ENCODE measurements at regions of chr5 and their contacts with region 1.

Region 1: DNA sequence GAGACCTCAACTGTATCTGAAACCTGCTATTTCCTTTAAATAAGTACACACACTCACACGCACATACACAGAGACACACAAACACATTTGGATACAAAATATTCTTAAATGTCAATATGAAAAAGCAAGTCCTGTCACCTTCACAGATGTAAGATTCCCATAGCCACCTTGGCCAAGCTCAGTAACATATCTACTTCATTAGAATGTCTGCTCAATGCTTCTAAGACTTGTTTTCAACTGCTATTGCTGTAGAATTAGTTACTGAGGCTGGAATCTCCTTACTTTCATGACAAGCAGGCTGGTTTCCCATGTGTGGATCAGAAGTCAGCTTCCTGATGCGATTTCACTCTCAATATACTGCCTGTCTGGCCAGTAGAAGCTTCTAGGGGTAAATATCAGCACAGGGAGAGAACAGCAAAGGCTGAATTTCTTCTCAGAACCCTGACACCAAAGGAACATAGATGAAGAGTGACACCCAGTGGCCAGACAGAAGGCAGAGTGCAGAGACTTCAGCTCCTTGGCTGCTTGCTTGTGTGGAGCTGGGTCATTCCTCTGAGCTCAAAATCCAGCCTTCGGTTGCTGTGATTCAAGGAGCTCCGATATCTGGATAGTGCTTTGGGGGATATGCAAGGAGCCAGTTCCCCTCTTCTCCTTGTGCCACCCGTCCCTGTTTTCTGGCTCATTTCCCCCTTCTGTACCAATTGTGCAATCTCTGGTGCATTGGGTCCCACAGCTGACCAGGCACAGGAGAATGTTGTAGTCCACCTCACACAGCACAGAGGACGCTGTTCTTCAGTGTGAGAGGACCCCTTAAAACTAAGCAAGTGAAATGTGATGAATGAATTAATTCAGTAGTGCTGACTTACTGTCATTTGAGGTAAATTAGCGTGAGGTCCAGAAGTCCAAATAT is 26.6 kb upstream of the ABLIM3 start:
- DNase-seq: peak in 1 of 2 donors; percentile 76
- ATAC-seq: peak; percentile 91 to 98 (median 95)
- H3K4me3 ChIP-seq: no peak overlapping the region
- H3K27ac ChIP-seq: peak overlapping the region in 6 of 10 donors; percentile 43 to 73 (median 59)
- H3K4me1 ChIP-seq: peaks cover 0 to 12% (median 6%) of the 10 kb centered on the region in 9 donors
- H3K27me3 ChIP-seq: no peaks in the 10 kb centered on the region
- CTCF ChIP-seq: peak; percentile 54 to 88 (median 75)

Region 2: GRCh38 chr5:148186248-148186996 is 928.2 kb before region 1 on chr5:
- intact Hi-C with region 1: loop called in 1 of 10 experiments (anchors 10 kb)
- DNase-seq: no peak
- ATAC-seq: peak in 2 of 8 donors; percentile 59 to 77
- H3K4me3 ChIP-seq: no peak overlapping the region
- H3K27ac ChIP-seq: peak overlapping the region in 2 of 10 donors; percentile 0 to 84
- H3K4me1 ChIP-seq: peaks cover 0 to 21% (median 0%) of the 10 kb centered on the region in 9 donors
- H3K27me3 ChIP-seq: no peaks in the 10 kb centered on the region
- CTCF ChIP-seq: no peak

Region 3: GRCh38 chr5:148810823-148811222 is 303.8 kb before region 1 on chr5:
- intact Hi-C with region 1: loop called in 1 of 10 experiments (anchors 10 kb)
- DNase-seq: no peak
- ATAC-seq: no peak
- H3K4me3 ChIP-seq: no peak overlapping the region
- H3K27ac ChIP-seq: peak overlapping the region in 1 of 10 donors; percentile 76
- H3K4me1 ChIP-seq: peaks cover 0 to 63% (median 19%) of the 10 kb centered on the region in 9 donors
- H3K27me3 ChIP-seq: no peaks in the 10 kb centered on the region
- CTCF ChIP-seq: no peak

Region 4: GRCh38 chr5:148998174-148998797 is 116.4 kb before region 1 on chr5:
- intact Hi-C with region 1: loop called in 2 of 10 experiments (anchors 2 to 5 kb)
- DNase-seq: peak in 1 of 2 donors; percentile 49
- ATAC-seq: peak in 7 of 8 donors; percentile 39 to 66 (median 53)
- H3K4me3 ChIP-seq: no peak overlapping the region
- H3K27ac ChIP-seq: no peak overlapping the region
- H3K4me1 ChIP-seq: peaks cover 0 to 35% (median 9%) of the 10 kb centered on the region in 9 donors
- H3K27me3 ChIP-seq: no peaks in the 10 kb centered on the region
- CTCF ChIP-seq: peak; percentile 42 to 77 (median 69)

Region 5: GRCh38 chr5:149011074-149011476 is 103.6 kb before region 1 on chr5:
- intact Hi-C with region 1: no loop called
- DNase-seq: no peak
- ATAC-seq: no peak
- H3K4me3 ChIP-seq: no peak overlapping the region
- H3K27ac ChIP-seq: no peak overlapping the region
- H3K4me1 ChIP-seq: peaks cover 0 to 5% (median 0%) of the 10 kb centered on the region in 9 donors
- H3K27me3 ChIP-seq: no peaks in the 10 kb centered on the region
- CTCF ChIP-seq: no peak

Region 6: GRCh38 chr5:149044453-149045088 is 70.1 kb before region 1 on chr5:
- intact Hi-C with region 1: loop called in 4 of 10 experiments (anchors 5 kb)
- DNase-seq: no peak
- ATAC-seq: no peak
- H3K4me3 ChIP-seq: no peak overlapping the region
- H3K27ac ChIP-seq: no peak overlapping the region
- H3K4me1 ChIP-seq: peaks cover 0 to 27% (median 19%) of the 10 kb centered on the region in 9 donors
- H3K27me3 ChIP-seq: no peaks in the 10 kb centered on the region
- CTCF ChIP-seq: no peak

Region 7: GRCh38 chr5:149063017-149063687 is 51.5 kb before region 1 on chr5 and contains the start of gene SH3TC2:
- intact Hi-C with region 1: loop called in 4 of 10 experiments (anchors 5 to 10 kb)
- DNase-seq: peak; percentile 66 to 74
- ATAC-seq: peak; percentile 71 to 92 (median 87)
- H3K4me3 ChIP-seq: peak within 1 kb of the TSS in 5 of 10 donors; percentile 1 to 23 (median 7)
- H3K27ac ChIP-seq: peak within 1 kb of the TSS; percentile 6 to 94 (median 84)
- H3K4me1 ChIP-seq: peaks cover 8 to 64% (median 58%) of the 10 kb centered on the region in 9 donors
- H3K27me3 ChIP-seq: no peaks in the 10 kb centered on the region
- CTCF ChIP-seq: no peak
- total RNA-seq, gene SH3TC2: 0.97 to 13.1 (median 7.4) TPM